Activated CD8-positive, alpha-beta T cell treated with anti-CD3 and anti-CD28 coated beads for 36 hours (primary cell): ENCODE measurements at regions of chr11 and their contacts with region 1.

Region 1: DNA sequence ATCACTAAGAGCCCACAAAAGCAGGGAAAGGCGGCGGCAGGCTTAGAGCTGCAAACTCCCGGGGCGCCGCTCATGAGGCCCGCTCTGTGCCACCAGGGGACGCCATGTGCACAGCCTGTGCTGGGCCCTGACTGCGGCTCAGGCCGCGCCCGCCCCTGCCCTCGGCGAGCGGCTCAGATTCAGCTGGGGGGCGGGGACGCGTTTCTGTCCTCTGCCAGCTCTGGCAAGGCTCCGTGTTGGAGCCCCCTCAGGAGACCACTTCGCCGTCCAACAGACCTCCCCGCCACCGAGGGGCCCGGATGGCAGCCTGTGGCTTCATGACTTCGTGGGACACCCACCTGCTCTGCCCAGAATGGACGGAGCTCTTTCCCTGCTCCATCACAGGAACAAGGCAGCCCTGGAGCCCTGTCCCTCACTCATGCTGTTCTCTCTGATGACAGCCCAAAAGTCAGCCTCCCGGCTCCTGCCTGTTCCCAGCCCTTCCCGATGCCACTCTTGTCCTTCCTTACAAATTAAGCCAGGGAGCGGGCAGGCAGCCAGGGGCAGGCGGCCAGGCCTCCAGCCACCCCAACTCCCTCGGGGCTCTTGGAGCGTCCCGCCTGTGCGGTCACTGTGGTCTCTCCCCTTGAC is 69.1 kb downstream of the NAT10 start:
- DNase-seq: peak; percentile 91
- ATAC-seq: peak; percentile 100
- H3K4me3 Mint-ChIP-seq: peak overlapping the region; percentile 15
- H3K27ac Mint-ChIP-seq: no peak overlapping the region
- H3K4me1 Mint-ChIP-seq: peaks cover 17% of the 10 kb centered on the region
- H3K27me3 Mint-ChIP-seq: peaks cover 4% of the 10 kb centered on the region
- CTCF ChIP-seq: peak; percentile 91

Region 2: DNA sequence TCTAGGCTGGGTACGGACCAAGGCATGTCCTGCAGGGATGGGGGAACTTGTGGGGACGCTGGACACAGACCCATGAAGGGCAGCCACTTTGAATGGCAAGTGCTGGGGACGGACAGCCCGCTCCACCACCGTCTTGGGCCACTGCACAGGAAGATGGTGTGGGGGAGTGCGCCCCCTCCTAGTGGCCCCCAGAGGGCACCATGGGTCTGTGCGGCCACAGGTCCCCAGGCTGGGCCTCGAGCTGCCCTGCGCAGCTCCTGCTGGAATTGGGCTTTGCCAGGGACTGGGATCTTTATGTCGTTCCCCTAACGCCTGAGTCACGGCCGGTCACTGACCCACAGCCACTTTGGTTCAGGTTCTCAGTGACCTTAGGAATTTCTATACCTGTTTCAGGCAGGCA is 24.7 kb before region 1 on chr11:
- CTCF ChIA-PET with region 1: interaction called, 11 read pairs
- POLR2A ChIA-PET with region 1: interaction called, 3 read pairs
- intact Hi-C with region 1: no loop called
- DNase-seq: no peak
- ATAC-seq: no peak
- H3K4me3 Mint-ChIP-seq: no peak overlapping the region
- H3K27ac Mint-ChIP-seq: no peak overlapping the region
- H3K4me1 Mint-ChIP-seq: no peaks in the 10 kb centered on the region
- H3K27me3 Mint-ChIP-seq: no peaks in the 10 kb centered on the region
- CTCF ChIP-seq: no peak

Region 3: DNA sequence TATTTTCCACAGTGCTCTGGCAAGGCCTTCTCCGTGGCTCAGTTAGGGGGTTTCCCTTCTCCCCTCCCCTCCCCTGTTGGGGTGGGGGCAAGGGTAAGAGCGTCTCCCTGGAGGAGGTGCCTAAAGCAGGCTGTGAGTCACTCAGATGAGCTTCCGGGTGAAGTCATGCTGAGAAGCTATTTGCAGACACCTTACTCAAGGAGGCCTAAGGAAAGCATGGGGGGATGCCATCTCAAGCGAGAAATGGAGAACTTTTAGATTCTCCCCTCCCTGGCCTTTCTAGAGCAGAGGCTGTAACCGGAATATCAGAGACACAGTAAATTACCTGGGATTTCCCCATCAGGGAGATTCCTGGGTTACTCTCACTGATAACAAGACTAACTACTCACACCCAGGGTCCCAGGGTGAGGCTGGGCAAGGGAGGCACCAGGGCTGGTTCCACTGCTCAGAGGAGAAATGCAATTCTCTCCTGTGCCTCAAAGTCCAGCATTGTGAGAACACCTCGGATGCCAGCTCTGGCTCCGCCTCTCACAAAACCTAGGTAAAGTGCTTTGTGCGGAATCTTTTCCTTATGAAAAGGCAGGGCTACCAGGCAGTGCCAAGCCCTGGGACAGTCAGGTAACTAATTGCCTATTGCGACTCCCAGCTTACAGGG is 59.7 kb after region 1 on chr11:
- CTCF ChIA-PET with region 1: interaction called, 17 read pairs
- POLR2A ChIA-PET with region 1: interaction called, 3 read pairs
- intact Hi-C with region 1: no loop called
- DNase-seq: peak; percentile 92
- ATAC-seq: peak; percentile 91
- H3K4me3 Mint-ChIP-seq: peak overlapping the region; percentile 27
- H3K27ac Mint-ChIP-seq: peak overlapping the region; percentile 86
- H3K4me1 Mint-ChIP-seq: peaks cover 70% of the 10 kb centered on the region
- H3K27me3 Mint-ChIP-seq: no peaks in the 10 kb centered on the region
- CTCF ChIP-seq: no peak

Region 4: DNA sequence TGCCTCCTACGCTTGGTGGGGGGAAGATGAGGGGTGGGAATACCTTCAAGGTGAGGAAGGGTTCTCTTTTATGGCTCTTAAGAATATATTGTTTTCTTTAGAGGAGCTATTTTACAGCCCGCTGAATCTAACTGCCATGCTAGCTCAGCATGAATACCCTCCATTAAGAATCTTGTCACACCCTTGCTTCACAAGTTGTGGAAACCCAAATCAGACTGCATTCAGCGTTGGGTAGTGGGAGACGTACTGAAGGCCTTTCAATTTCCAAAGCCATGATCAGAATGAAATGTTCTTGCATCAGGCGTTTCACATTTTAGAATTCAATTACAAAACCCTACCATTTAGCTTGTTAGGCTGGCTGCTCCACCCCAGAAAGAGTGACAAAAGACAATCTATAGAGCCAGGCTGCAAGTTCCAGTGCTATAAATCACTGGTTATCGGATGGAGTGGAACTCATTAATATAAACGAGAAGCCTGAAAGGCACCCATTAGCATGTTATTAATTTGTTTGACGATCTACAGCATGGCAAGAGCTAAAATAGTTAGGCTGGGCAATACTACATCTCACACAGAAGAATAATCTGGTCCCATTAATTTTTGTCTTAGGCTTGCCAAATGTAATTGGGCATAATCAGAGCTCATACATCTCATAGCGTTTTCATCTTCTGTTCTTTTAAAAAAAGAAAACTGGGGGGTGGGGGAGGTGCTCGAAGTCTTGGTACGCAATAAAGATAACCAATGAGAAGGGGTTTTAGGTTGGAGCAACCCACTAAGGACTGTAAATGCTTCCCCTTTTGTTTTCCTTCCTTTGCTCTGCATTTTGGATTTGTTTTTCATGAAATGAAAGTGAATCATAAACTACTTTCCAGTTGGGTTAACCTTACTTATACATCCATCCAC is 125.7 kb after region 1 on chr11:
- CTCF ChIA-PET with region 1: interaction called, 11 read pairs
- POLR2A ChIA-PET with region 1: no interaction called
- intact Hi-C with region 1: no loop called
- DNase-seq: no peak
- ATAC-seq: no peak
- H3K4me3 Mint-ChIP-seq: no peak overlapping the region
- H3K27ac Mint-ChIP-seq: no peak overlapping the region
- H3K4me1 Mint-ChIP-seq: peaks cover 11% of the 10 kb centered on the region
- H3K27me3 Mint-ChIP-seq: no peaks in the 10 kb centered on the region
- CTCF ChIP-seq: no peak

Region 5: DNA sequence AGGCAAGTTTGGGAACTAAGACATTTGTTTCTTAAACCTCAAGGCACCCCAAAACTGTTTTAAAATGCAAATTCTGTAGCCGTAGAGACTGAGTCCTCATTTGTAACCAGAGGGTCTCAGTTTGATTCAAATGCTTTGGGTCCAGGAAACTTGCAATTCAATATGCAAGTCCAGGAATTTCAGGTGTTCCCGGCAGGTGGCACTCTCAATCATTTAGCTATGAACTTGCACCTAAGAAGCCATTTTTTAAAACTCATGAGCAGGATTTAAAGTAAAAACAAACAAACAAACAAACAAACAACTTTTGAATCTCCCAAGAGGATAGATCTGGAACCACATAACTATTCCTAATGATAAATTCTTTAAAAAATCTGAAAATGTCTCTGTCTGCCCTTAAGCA is 192.0 kb after region 1 on chr11:
- CTCF ChIA-PET with region 1: interaction called, 54 read pairs
- POLR2A ChIA-PET with region 1: interaction called, 3 read pairs
- intact Hi-C with region 1: no loop called
- DNase-seq: peak; percentile 45
- ATAC-seq: no peak
- H3K4me3 Mint-ChIP-seq: no peak overlapping the region
- H3K27ac Mint-ChIP-seq: no peak overlapping the region
- H3K4me1 Mint-ChIP-seq: peaks cover 18% of the 10 kb centered on the region
- H3K27me3 Mint-ChIP-seq: peaks cover 26% of the 10 kb centered on the region
- CTCF ChIP-seq: no peak

Region 6: DNA sequence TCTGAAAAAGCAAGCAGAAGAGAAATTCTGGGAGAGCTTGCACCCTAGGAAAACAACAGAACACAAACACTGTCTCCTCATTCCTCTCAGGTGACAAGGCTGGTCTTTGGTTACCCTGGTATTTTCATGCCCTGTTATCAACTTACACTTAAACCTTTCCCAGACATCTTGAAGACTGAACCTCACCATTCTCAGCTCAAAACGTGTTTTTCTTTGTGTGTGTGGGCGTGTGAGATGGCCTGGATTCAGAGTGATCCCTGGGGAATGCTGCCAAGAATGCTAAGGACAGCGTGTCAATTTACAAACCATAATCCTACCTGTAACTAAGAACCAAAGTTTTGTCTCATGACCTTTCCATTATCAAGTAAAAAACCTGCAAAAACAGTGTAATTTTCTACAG is 305.8 kb after region 1 on chr11:
- CTCF ChIA-PET with region 1: no interaction called
- POLR2A ChIA-PET with region 1: no interaction called
- intact Hi-C with region 1: loop called (anchors 10 kb)
- DNase-seq: no peak
- ATAC-seq: no peak
- H3K4me3 Mint-ChIP-seq: no peak overlapping the region
- H3K27ac Mint-ChIP-seq: no peak overlapping the region
- H3K4me1 Mint-ChIP-seq: no peaks in the 10 kb centered on the region
- H3K27me3 Mint-ChIP-seq: peaks cover 2% of the 10 kb centered on the region
- CTCF ChIP-seq: no peak